CD4-positive, alpha-beta memory T cell (primary cell): ENCODE measurements at regions of chr3 and their contacts with region 1.

Region 1: GRCh38 chr3:115836944-115837343 is 213.6 kb downstream of the GAP43 start:
- DNase-seq: peak in 2 of 5 donors; percentile 2 to 11
- H3K4me3 ChIP-seq: no peak overlapping the region
- H3K4me3 Mint-ChIP-seq: no peak overlapping the region
- H3K27ac ChIP-seq: no peak overlapping the region
- H3K27ac Mint-ChIP-seq: no peak overlapping the region
- H3K4me1 ChIP-seq: no peaks in the 10 kb centered on the region
- H3K4me1 Mint-ChIP-seq: no peaks in the 10 kb centered on the region
- H3K27me3 ChIP-seq: no peaks in the 10 kb centered on the region
- H3K27me3 Mint-ChIP-seq: peaks cover 2 to 9% of the 10 kb centered on the region in 2 donors

Region 2: GRCh38 chr3:115819785-115820384 is 17.1 kb before region 1 on chr3:
- CTCF ChIA-PET with region 1: interaction called, 18 read pairs
- POLR2A ChIA-PET with region 1: no interaction called
- intact Hi-C with region 1: no loop called
- DNase-seq: peak; percentile 63 to 70 (median 65)
- H3K4me3 ChIP-seq: no peak overlapping the region
- H3K4me3 Mint-ChIP-seq: no peak overlapping the region
- H3K27ac ChIP-seq: no peak overlapping the region
- H3K27ac Mint-ChIP-seq: no peak overlapping the region
- H3K4me1 ChIP-seq: no peaks in the 10 kb centered on the region
- H3K4me1 Mint-ChIP-seq: no peaks in the 10 kb centered on the region
- H3K27me3 ChIP-seq: no peaks in the 10 kb centered on the region
- H3K27me3 Mint-ChIP-seq: peaks cover 0 to 2% of the 10 kb centered on the region in 2 donors

Region 3: DNA sequence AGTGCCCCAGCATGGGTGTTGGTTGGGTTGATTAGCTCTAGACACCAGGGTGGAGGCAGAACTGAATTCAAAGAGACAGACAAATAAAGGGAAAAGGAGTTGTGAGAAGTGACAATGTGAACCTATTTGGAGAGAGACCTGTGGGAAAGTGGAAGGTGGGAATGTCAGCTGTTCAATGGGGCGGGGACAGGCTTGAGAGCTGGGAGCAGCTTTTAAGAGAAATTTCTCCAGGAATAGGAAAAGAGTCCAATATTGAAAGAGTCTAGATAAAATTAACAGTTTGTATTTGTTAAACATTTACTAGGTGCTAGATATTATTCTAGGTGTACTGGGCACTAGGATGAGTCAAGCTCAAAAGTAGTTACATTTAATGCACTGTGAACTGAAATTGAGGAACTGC is 11.7 kb after region 1 on chr3:
- CTCF ChIA-PET with region 1: interaction called, 12 read pairs
- POLR2A ChIA-PET with region 1: no interaction called
- intact Hi-C with region 1: no loop called
- DNase-seq: no peak
- H3K4me3 ChIP-seq: no peak overlapping the region
- H3K4me3 Mint-ChIP-seq: no peak overlapping the region
- H3K27ac ChIP-seq: no peak overlapping the region
- H3K27ac Mint-ChIP-seq: no peak overlapping the region
- H3K4me1 ChIP-seq: no peaks in the 10 kb centered on the region
- H3K4me1 Mint-ChIP-seq: no peaks in the 10 kb centered on the region
- H3K27me3 ChIP-seq: no peaks in the 10 kb centered on the region
- H3K27me3 Mint-ChIP-seq: peaks cover 8 to 12% of the 10 kb centered on the region in 2 donors